ENCODE measurements at regions of chr17 and their contacts with region 1.

Region 1: DNA sequence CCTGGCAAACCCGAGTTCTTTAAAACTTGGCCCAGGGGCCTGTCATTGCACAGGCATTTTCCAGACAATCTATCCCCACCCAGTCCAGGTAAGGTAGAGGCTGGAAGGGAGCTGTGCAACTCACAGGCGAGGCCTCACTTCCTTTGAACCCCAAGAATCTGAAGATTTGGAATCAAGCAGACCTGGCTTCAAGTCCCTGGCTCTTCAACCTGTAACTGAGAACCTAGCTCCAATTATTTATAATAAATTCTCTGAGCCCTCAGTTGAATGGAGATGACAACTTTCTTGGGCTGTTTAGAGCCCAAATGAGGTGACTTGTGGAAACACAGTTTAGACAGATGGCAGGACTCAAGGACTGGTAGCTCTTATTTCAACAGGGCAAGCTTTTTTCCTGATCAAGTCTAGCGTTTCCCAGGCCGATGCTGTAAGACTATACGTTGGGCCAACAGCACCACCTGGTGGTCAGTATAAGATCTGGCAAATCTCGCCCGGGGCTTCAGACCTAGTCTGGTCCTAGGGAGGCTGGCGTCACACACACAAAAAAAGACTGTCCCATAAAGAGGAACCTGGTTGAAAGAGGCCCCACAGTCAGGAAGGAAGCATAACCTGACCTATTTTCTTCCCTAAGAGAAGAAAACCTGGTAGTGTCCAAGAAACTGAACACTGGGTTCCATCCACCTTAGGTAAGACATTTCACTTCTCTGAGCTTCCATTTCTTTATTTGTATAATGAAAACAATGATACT is 117.9 kb downstream of the C17orf67 start:
- DNase-seq: peak; percentile 95
- H3K4me3 ChIP-seq: no peak overlapping the region
- H3K27ac ChIP-seq: no peak overlapping the region
- H3K4me1 ChIP-seq: no peaks in the 10 kb centered on the region
- H3K27me3 ChIP-seq: peaks cover 0 to 7% (median 2%) of the 10 kb centered on the region in 4 donors
- CTCF ChIP-seq: peak; percentile 83 to 85 (median 83)
- EP300 ChIP-seq: no peak
- POLR2A ChIP-seq: no peak

Region 2: GRCh38 chr17:56679115-56679766 is 36.5 kb before region 1 on chr17:
- intact Hi-C with region 1: loop called (anchors 5 kb)
- DNase-seq: no peak
- H3K4me3 ChIP-seq: peak overlapping the region; percentile 37 to 52 (median 41)
- H3K27ac ChIP-seq: no peak overlapping the region
- H3K4me1 ChIP-seq: peaks cover 7 to 14% (median 12%) of the 10 kb centered on the region in 4 donors
- H3K27me3 ChIP-seq: peaks cover 0 to 55% (median 2%) of the 10 kb centered on the region in 4 donors
- CTCF ChIP-seq: peak; percentile 42 to 64 (median 53)
- EP300 ChIP-seq: no peak
- POLR2A ChIP-seq: no peak

Measured in esophagus muscularis mucosa (tissue), 4 donors.